Right ventricle myocardium inferior (tissue), 1 donor: ENCODE measurements at regions of chr12 and their contacts with region 1.

Region 1: GRCh38 chr12:21501379-21501956 is at the starts of genes GOLT1B and RECQL:
- DNase-seq: peak; percentile 92
- ATAC-seq: peak; percentile 99
- total RNA-seq, gene GOLT1B: 22.0 TPM
- total RNA-seq, gene RECQL: 19.4 TPM

Region 2: GRCh38 chr12:21657326-21658077 is 156.0 kb after region 1 on chr12 and contains the start of gene LDHB:
- intact Hi-C with region 1: loop called (anchors 10 kb)
- DNase-seq: peak; percentile 96
- ATAC-seq: peak; percentile 100
- total RNA-seq, gene LDHB: 1,958 TPM

Region 3: GRCh38 chr12:22046090-22046967 is 544.9 kb after region 1 on chr12 and contains the start of gene CMAS:
- intact Hi-C with region 1: loop called (anchors 10 kb)
- DNase-seq: peak; percentile 88
- ATAC-seq: peak; percentile 96
- total RNA-seq, gene CMAS: 34.6 TPM